ENCODE measurements at regions of chr13 and their contacts with region 1.

Region 1: DNA sequence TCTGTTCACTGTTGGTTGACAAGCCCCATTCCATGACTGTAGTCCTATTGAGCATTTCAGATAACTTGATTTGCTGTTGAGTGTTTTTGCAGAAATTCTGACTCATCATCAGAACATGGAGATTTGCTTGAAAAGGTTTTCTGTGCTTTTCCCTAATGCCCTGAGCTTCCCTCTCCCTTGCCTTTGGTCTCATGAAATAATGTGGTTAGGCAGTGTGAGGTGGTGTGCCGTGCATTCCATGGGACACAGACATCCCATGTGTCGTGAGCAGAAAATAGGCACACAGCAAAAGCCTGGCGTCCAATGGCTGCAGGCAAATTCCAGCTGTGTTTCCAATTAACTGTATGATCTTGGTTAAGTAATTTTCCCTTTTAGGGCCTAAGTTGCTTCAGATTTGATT is 197.4 kb downstream of the DLEU7 start:
- DNase-seq: no peak
- ATAC-seq: no peak
- H3K4me3 ChIP-seq: no peak overlapping the region
- H3K27ac ChIP-seq: no peak overlapping the region
- H3K4me1 ChIP-seq: peaks cover 0 to 9% (median 5%) of the 10 kb centered on the region in 9 donors
- H3K27me3 ChIP-seq: no peaks in the 10 kb centered on the region
- CTCF ChIP-seq: no peak

Region 2: GRCh38 chr13:49606747-49607648 is 1039.1 kb before region 1 on chr13:
- intact Hi-C with region 1: no loop called
- DNase-seq: peak; percentile 85 to 88
- ATAC-seq: peak; percentile 93 to 99 (median 97)
- H3K4me3 ChIP-seq: peak overlapping the region in 8 of 10 donors; percentile 18 to 52 (median 42)
- H3K27ac ChIP-seq: peak overlapping the region in 5 of 10 donors; percentile 34 to 53 (median 45)
- H3K4me1 ChIP-seq: peaks cover 0 to 18% (median 0%) of the 10 kb centered on the region in 9 donors
- H3K27me3 ChIP-seq: no peaks in the 10 kb centered on the region
- CTCF ChIP-seq: peak; percentile 68 to 93 (median 84)

Region 3: GRCh38 chr13:50457415-50458393 is 188.4 kb before region 1 on chr13:
- intact Hi-C with region 1: no loop called
- DNase-seq: no peak
- ATAC-seq: peak in 1 of 8 donors; percentile 53
- H3K4me3 ChIP-seq: no peak overlapping the region
- H3K27ac ChIP-seq: no peak overlapping the region
- H3K4me1 ChIP-seq: peaks cover 7 to 42% (median 19%) of the 10 kb centered on the region in 9 donors
- H3K27me3 ChIP-seq: no peaks in the 10 kb centered on the region
- CTCF ChIP-seq: no peak

Region 4: DNA sequence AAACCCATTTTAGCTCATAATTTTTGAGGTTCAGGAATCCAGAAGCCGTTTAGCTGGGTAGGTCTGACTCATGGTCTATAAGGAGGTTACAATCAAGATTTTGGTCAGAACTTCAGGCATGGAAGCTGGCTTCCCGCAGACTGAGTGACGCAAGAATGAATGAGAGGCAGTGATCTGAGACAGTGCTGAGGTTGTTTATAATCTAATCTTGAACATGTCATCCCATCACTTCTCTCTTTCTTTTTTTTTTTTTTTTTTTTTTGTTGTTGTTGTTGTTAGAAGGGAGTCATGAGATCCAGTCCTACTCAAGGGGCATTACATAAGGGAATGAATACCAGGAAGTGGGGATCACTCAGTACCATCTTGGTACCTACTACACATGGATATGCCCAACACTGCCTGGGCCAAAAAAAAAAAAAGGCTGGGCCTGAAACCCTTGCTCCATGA is 19.9 kb before region 1 on chr13:
- intact Hi-C with region 1: loop called in 1 of 10 experiments (anchors 1 kb)
- DNase-seq: no peak
- ATAC-seq: no peak
- H3K4me3 ChIP-seq: no peak overlapping the region
- H3K27ac ChIP-seq: peak overlapping the region in 1 of 10 donors; percentile 63
- H3K4me1 ChIP-seq: peaks cover 0 to 30% (median 0%) of the 10 kb centered on the region in 9 donors
- H3K27me3 ChIP-seq: no peaks in the 10 kb centered on the region
- CTCF ChIP-seq: no peak

Measured in heart right ventricle (tissue), 16 donors.